Heart right ventricle (tissue), 16 donors: ENCODE measurements at regions of chr13 and their contacts with region 1.

Region 1: GRCh38 chr13:30802953-30803478 is 67.7 kb downstream of the ALOX5AP start:
- DNase-seq: peak; percentile 82 to 88
- ATAC-seq: peak; percentile 95 to 98 (median 96)
- H3K4me3 ChIP-seq: peak overlapping the region in 9 of 10 donors; percentile 26 to 57 (median 50)
- H3K27ac ChIP-seq: peak overlapping the region in 5 of 10 donors; percentile 10 to 61 (median 40)
- H3K4me1 ChIP-seq: peaks cover 0 to 28% (median 23%) of the 10 kb centered on the region in 9 donors
- H3K27me3 ChIP-seq: no peaks in the 10 kb centered on the region
- CTCF ChIP-seq: peak; percentile 86 to 99 (median 97)

Region 2: GRCh38 chr13:30125422-30126073 is 677.5 kb before region 1 on chr13:
- intact Hi-C with region 1: loop called in 9 of 10 experiments (anchors 5 to 10 kb)
- DNase-seq: no peak
- ATAC-seq: no peak
- H3K4me3 ChIP-seq: no peak overlapping the region
- H3K27ac ChIP-seq: no peak overlapping the region
- H3K4me1 ChIP-seq: peaks cover 0 to 6% (median 0%) of the 10 kb centered on the region in 9 donors
- H3K27me3 ChIP-seq: peaks cover 0 to 19% (median 0%) of the 10 kb centered on the region in 7 donors
- CTCF ChIP-seq: no peak

Region 3: GRCh38 chr13:30355384-30355699 is 447.7 kb before region 1 on chr13:
- intact Hi-C with region 1: loop called in 2 of 10 experiments (anchors 10 kb)
- DNase-seq: peak in 1 of 2 donors; percentile 37
- ATAC-seq: peak in 7 of 8 donors; percentile 63 to 87 (median 79)
- H3K4me3 ChIP-seq: no peak overlapping the region
- H3K27ac ChIP-seq: no peak overlapping the region
- H3K4me1 ChIP-seq: peaks cover 0 to 11% (median 0%) of the 10 kb centered on the region in 9 donors
- H3K27me3 ChIP-seq: no peaks in the 10 kb centered on the region
- CTCF ChIP-seq: peak; percentile 20 to 69 (median 60)

Region 4: GRCh38 chr13:30617315-30618185 is 185.5 kb before region 1 on chr13 and contains the start of gene USPL1:
- intact Hi-C with region 1: loop called in 1 of 10 experiments (anchors 5 kb)
- DNase-seq: peak; percentile 98 to 99
- ATAC-seq: peak; percentile 95 to 99 (median 97)
- H3K4me3 ChIP-seq: peak within 1 kb of the TSS; percentile 63 to 91 (median 80)
- H3K27ac ChIP-seq: peak within 1 kb of the TSS; percentile 96 to 100 (median 99)
- H3K4me1 ChIP-seq: peaks cover 0 to 44% (median 27%) of the 10 kb centered on the region in 9 donors
- H3K27me3 ChIP-seq: no peaks in the 10 kb centered on the region
- CTCF ChIP-seq: peak in 8 of 9 donors; percentile 14 to 47 (median 38)
- total RNA-seq, gene USPL1: 8.9 to 10.6 (median 9.8) TPM

Region 5: DNA sequence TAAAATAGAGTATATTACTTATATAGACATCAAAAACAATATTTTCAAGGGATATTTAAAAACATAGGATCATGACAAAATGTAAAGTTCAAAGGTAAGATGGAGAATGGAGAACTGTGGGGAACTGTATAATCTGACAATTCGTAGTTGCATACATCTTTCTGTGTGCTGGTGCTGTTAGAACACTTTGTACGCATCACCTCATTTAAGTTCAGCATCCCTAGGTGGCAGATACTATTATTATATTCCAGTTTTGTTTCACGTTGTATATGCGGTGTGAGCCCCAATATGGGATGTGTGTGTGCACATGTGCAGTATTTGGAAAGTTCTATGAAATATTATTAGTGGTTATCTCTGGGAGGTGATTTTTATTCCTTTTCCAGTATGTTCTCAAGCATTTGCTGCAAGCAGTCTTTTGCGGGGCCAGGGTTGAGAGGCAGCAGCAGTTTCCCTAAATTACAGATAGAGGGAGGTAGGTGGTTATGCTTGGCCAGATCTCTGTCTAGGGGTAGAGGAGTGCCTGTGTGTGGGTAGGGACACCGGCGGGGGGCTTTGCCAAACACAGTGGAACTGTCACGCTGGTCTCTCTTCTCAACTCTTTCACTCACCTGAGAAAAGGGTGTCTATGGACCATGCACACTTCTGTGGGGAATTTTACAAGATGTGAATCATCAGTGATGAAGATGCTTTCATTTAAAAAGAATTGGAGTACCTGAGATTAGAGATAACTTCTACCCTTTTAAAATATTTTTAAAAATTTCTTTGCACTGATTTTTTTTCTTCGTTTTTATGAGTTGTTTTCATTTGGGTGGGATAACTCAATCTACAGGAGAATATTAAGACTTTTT is 123.3 kb before region 1 on chr13:
- intact Hi-C with region 1: loop called in 9 of 10 experiments (anchors 2 to 5 kb)
- DNase-seq: no peak
- ATAC-seq: peak in 7 of 8 donors; percentile 45 to 81 (median 74)
- H3K4me3 ChIP-seq: no peak overlapping the region
- H3K27ac ChIP-seq: no peak overlapping the region
- H3K4me1 ChIP-seq: peaks cover 0 to 19% (median 0%) of the 10 kb centered on the region in 9 donors
- H3K27me3 ChIP-seq: no peaks in the 10 kb centered on the region
- CTCF ChIP-seq: peak in 8 of 9 donors; percentile 12 to 70 (median 58)

Region 6: GRCh38 chr13:30685320-30685859 is 117.6 kb before region 1 on chr13:
- intact Hi-C with region 1: loop called in 3 of 10 experiments (anchors 2 to 5 kb)
- DNase-seq: no peak
- ATAC-seq: no peak
- H3K4me3 ChIP-seq: no peak overlapping the region
- H3K27ac ChIP-seq: no peak overlapping the region
- H3K4me1 ChIP-seq: peaks cover 0 to 20% (median 0%) of the 10 kb centered on the region in 9 donors
- H3K27me3 ChIP-seq: no peaks in the 10 kb centered on the region
- CTCF ChIP-seq: no peak

Region 7: GRCh38 chr13:30712536-30713532 is 90.2 kb before region 1 on chr13:
- intact Hi-C with region 1: no loop called
- DNase-seq: no peak
- ATAC-seq: peak; percentile 62 to 88 (median 80)
- H3K4me3 ChIP-seq: peak overlapping the region in 1 of 10 donors; percentile 3
- H3K27ac ChIP-seq: peak overlapping the region in 2 of 10 donors; percentile 36 to 83
- H3K4me1 ChIP-seq: peaks cover 6 to 56% (median 15%) of the 10 kb centered on the region in 9 donors
- H3K27me3 ChIP-seq: no peaks in the 10 kb centered on the region
- CTCF ChIP-seq: no peak

Region 8: GRCh38 chr13:30865123-30866049 is 62.4 kb after region 1 on chr13:
- intact Hi-C with region 1: loop called in 3 of 10 experiments (anchors 5 to 10 kb)
- DNase-seq: peak; percentile 67 to 70
- ATAC-seq: peak; percentile 78 to 86 (median 82)
- H3K4me3 ChIP-seq: no peak overlapping the region
- H3K27ac ChIP-seq: peak overlapping the region in 8 of 10 donors; percentile 42 to 80 (median 60)
- H3K4me1 ChIP-seq: peaks cover 5 to 33% (median 18%) of the 10 kb centered on the region in 9 donors
- H3K27me3 ChIP-seq: peaks cover 0 to 7% (median 0%) of the 10 kb centered on the region in 7 donors
- CTCF ChIP-seq: peak; percentile 79 to 93 (median 90)